Natural killer cell (primary cell): ENCODE measurements at regions of chr9 and their contacts with region 1.

Region 1: GRCh38 chr9:96486368-96487028 is 36.5 kb downstream of the HABP4 start:
- DNase-seq: no peak
- ATAC-seq: no peak
- H3K4me3 ChIP-seq: no peak overlapping the region
- H3K4me3 Mint-ChIP-seq: no peak overlapping the region
- H3K27ac ChIP-seq: no peak overlapping the region
- H3K27ac Mint-ChIP-seq: no peak overlapping the region
- H3K4me1 ChIP-seq: no peaks in the 10 kb centered on the region
- H3K4me1 Mint-ChIP-seq: peaks cover 0 to under 1% of the 10 kb centered on the region in 2 donors
- H3K27me3 ChIP-seq: no peaks in the 10 kb centered on the region
- H3K27me3 Mint-ChIP-seq: no peaks in the 10 kb centered on the region
- CTCF ChIP-seq: no peak

Region 2: GRCh38 chr9:96436063-96436455 is 50.4 kb before region 1 on chr9:
- intact Hi-C with region 1: no loop called
- DNase-seq: peak; percentile 27 to 44
- ATAC-seq: peak; percentile 71 to 94 (median 92)
- H3K4me3 ChIP-seq: no peak overlapping the region
- H3K4me3 Mint-ChIP-seq: no peak overlapping the region
- H3K27ac ChIP-seq: no peak overlapping the region
- H3K27ac Mint-ChIP-seq: peak overlapping the region in 1 of 2 donors; percentile 1
- H3K4me1 ChIP-seq: peaks cover 14% of the 10 kb centered on the region
- H3K4me1 Mint-ChIP-seq: peaks cover 12 to 13% of the 10 kb centered on the region in 2 donors
- H3K27me3 ChIP-seq: no peaks in the 10 kb centered on the region
- H3K27me3 Mint-ChIP-seq: peaks cover 2 to 10% of the 10 kb centered on the region in 2 donors
- CTCF ChIP-seq: no peak

Region 3: DNA sequence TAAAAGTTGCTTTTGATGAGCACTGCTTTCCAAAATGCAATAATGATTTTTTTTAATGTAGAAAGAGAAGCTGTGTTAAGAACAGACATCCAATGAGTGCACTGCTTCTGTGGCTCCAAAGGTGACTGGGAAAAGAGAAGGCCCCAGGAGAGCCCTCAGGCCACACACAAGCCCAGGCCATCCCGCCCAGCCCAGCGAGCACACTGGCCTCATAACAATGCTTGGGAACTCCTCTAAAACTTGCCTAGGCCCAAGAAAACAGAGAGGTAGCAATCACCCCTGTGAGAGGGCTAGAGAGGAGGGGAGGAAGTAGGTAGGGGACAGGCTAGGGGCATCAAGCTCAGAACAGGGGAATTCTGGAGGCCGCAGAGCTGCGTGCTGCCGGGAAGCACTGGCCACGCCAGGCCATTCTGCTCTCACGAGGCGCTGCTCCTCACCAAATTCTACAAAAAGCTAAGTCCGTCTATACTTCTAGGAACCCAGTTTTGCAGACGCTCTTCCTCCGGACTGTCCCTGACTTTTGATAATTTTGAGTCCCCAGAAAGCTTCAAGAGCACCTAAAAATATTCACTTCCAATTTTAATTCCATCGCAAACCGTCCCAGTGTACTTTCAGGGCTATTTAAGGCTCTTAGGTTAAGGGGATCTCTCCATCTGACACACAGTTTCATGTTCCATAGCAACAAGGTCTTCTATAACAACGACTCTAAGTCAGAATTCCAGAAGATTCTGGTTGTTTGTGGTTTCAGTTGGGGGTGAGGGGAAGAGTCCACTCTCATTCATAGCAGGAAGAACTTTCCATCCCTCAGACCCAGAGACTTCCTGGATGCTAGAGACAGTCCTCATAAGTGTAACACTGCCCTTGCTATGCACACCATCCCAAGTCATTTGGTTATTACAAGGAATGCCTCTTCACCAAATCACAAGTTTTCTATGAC is 14.5 kb after region 1 on chr9:
- intact Hi-C with region 1: loop called (anchors 1 kb)
- DNase-seq: no peak
- ATAC-seq: no peak
- H3K4me3 ChIP-seq: no peak overlapping the region
- H3K4me3 Mint-ChIP-seq: no peak overlapping the region
- H3K27ac ChIP-seq: no peak overlapping the region
- H3K27ac Mint-ChIP-seq: no peak overlapping the region
- H3K4me1 ChIP-seq: no peaks in the 10 kb centered on the region
- H3K4me1 Mint-ChIP-seq: no peaks in the 10 kb centered on the region
- H3K27me3 ChIP-seq: no peaks in the 10 kb centered on the region
- H3K27me3 Mint-ChIP-seq: peaks cover 4 to 11% of the 10 kb centered on the region in 2 donors
- CTCF ChIP-seq: no peak